Activated B cell treated with CpG ODN at 0.5 μM for 24 hours (primary cell): ENCODE measurements at regions of chr10 and their contacts with region 1.

Region 1: DNA sequence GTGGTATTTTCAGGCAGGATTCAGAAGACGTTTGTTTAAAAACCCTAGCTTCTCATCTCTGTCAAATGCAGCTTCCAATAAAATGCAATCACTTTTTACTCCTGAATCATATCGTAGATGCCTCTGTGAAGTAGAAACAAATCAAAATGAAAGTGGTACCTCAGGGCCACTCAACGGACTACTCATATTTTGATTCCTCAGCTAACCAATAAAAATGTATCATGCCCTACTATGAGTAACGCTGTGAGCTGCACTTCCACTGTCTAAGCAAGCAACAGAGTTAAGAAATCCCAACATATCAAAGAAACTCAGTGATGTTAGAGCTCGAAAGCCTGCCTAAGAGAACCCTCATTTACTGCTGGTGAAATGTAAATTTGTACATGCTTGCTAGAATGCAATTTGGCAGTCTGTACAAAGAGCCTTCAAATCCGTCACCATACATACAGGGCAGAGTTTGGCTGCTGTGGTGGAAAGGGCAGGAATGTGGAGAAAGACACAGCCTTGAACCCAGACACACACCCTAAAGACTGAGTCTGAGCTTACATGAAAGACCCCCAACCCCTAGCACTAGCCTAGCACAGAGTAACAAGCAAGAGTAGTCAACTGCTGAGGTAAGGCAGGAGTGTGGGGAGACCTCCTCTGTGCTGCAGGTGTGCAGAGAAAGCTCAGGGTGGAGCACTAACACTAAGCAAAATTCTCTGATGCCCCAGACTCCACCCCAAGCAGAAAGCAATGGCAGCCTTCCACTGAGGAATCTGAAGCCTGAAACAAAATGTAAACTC is 151.5 kb downstream of the ANK3 start:
- DNase-seq: peak; percentile 23
- ATAC-seq: peak; percentile 51
- H3K4me3 Mint-ChIP-seq: peak overlapping the region; percentile 67
- H3K27ac Mint-ChIP-seq: peak overlapping the region; percentile 93
- H3K4me1 Mint-ChIP-seq: peaks cover 61% of the 10 kb centered on the region
- H3K27me3 Mint-ChIP-seq: no peaks in the 10 kb centered on the region
- CTCF ChIP-seq: no peak

Region 2: GRCh38 chr10:59976909-59977308 is 261.3 kb before region 1 on chr10:
- CTCF ChIA-PET with region 1: no interaction called
- POLR2A ChIA-PET with region 1: no interaction called
- intact Hi-C with region 1: no loop called
- DNase-seq: no peak
- ATAC-seq: no peak
- H3K4me3 Mint-ChIP-seq: no peak overlapping the region
- H3K27ac Mint-ChIP-seq: no peak overlapping the region
- H3K4me1 Mint-ChIP-seq: no peaks in the 10 kb centered on the region
- H3K27me3 Mint-ChIP-seq: no peaks in the 10 kb centered on the region
- CTCF ChIP-seq: no peak

Region 3: GRCh38 chr10:60114765-60115586 is 123.2 kb before region 1 on chr10:
- CTCF ChIA-PET with region 1: interaction called, 15 read pairs
- POLR2A ChIA-PET with region 1: no interaction called
- intact Hi-C with region 1: no loop called
- DNase-seq: no peak
- ATAC-seq: peak; percentile 64
- H3K4me3 Mint-ChIP-seq: no peak overlapping the region
- H3K27ac Mint-ChIP-seq: no peak overlapping the region
- H3K4me1 Mint-ChIP-seq: no peaks in the 10 kb centered on the region
- H3K27me3 Mint-ChIP-seq: no peaks in the 10 kb centered on the region
- CTCF ChIP-seq: no peak

Region 4: DNA sequence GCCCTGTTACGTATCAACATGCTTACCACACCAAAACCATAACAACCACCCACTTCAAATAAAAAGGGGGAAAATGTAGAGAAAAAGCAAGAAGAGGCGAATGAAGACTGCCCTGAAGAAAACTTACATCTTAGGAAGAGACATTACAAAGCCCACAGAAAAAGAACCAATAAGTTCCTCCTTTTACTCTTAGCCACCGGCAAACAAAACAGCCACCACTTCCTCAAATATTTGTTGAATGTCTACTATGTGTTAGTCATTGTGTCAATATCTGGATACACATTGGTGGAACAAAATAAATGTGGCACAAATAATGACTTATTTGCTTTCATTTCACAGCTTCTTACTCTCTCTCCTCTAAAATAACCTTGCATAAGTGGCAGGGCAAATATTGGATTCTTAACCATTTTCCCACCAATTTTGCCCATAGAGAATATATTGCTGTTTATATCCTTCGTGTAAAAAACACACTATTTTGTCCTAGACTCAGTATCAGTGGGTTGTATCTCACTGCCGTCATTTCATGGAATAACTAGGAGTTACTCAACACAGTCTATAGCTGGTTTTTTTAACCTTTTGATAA is 44.7 kb after region 1 on chr10:
- CTCF ChIA-PET with region 1: interaction called, 3 read pairs
- POLR2A ChIA-PET with region 1: no interaction called
- intact Hi-C with region 1: loop called (anchors 2 kb)
- DNase-seq: no peak
- ATAC-seq: peak; percentile 88
- H3K4me3 Mint-ChIP-seq: peak overlapping the region; percentile 72
- H3K27ac Mint-ChIP-seq: peak overlapping the region; percentile 80
- H3K4me1 Mint-ChIP-seq: peaks cover 34% of the 10 kb centered on the region
- H3K27me3 Mint-ChIP-seq: no peaks in the 10 kb centered on the region
- CTCF ChIP-seq: no peak

Region 5: GRCh38 chr10:60323162-60323561 is 85.0 kb after region 1 on chr10:
- CTCF ChIA-PET with region 1: no interaction called
- POLR2A ChIA-PET with region 1: no interaction called
- intact Hi-C with region 1: no loop called
- DNase-seq: no peak
- ATAC-seq: no peak
- H3K4me3 Mint-ChIP-seq: no peak overlapping the region
- H3K27ac Mint-ChIP-seq: no peak overlapping the region
- H3K4me1 Mint-ChIP-seq: no peaks in the 10 kb centered on the region
- H3K27me3 Mint-ChIP-seq: no peaks in the 10 kb centered on the region
- CTCF ChIP-seq: no peak

Region 6: DNA sequence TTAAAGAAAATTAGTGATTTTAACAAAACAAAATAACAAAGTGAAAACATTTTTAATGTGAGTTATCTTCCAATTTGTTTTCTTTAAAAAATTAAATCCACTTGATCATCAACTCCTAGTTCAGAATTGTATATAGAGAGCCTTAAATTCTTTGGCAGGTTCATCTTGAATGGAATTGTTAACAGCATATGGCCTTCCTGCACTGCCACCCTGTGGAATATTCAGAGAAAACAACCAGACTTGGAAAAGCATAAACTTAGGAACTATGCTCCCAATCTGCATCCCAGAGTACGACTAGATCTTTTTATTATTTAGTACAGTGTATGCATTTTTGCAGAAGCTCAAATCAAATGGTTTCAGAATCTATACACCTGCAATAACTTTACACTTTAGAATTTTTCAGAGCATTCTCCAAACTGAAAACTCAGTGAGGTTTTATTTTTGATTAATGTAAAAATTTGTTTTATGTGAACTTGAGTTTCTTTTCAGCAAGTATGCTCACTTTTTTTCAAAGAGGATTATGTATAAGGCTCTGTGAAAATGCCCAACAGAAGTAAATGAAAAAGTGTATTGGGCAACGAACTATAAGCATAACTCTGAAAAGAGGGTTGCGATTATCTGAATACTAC is 196.4 kb after region 1 on chr10:
- CTCF ChIA-PET with region 1: interaction called, 68 read pairs
- POLR2A ChIA-PET with region 1: interaction called, 5 read pairs
- intact Hi-C with region 1: loop called (anchors 1 kb)
- DNase-seq: no peak
- ATAC-seq: no peak
- H3K4me3 Mint-ChIP-seq: no peak overlapping the region
- H3K27ac Mint-ChIP-seq: no peak overlapping the region
- H3K4me1 Mint-ChIP-seq: peaks cover 5% of the 10 kb centered on the region
- H3K27me3 Mint-ChIP-seq: no peaks in the 10 kb centered on the region
- CTCF ChIP-seq: peak; percentile 49

Region 7: GRCh38 chr10:60733189-60733822 is 495.1 kb after region 1 on chr10:
- CTCF ChIA-PET with region 1: no interaction called
- POLR2A ChIA-PET with region 1: no interaction called
- intact Hi-C with region 1: loop called (anchors 2 kb)
- DNase-seq: peak; percentile 45
- ATAC-seq: peak; percentile 83
- H3K4me3 Mint-ChIP-seq: peak overlapping the region; percentile 93
- H3K27ac Mint-ChIP-seq: no peak overlapping the region
- H3K4me1 Mint-ChIP-seq: peaks cover 36% of the 10 kb centered on the region
- H3K27me3 Mint-ChIP-seq: peaks cover 4% of the 10 kb centered on the region
- CTCF ChIP-seq: no peak

Region 8: GRCh38 chr10:61010863-61011262 is 772.7 kb after region 1 on chr10:
- CTCF ChIA-PET with region 1: no interaction called
- POLR2A ChIA-PET with region 1: no interaction called
- intact Hi-C with region 1: no loop called
- DNase-seq: no peak
- ATAC-seq: no peak
- H3K4me3 Mint-ChIP-seq: no peak overlapping the region
- H3K27ac Mint-ChIP-seq: no peak overlapping the region
- H3K4me1 Mint-ChIP-seq: no peaks in the 10 kb centered on the region
- H3K27me3 Mint-ChIP-seq: peaks cover 14% of the 10 kb centered on the region
- CTCF ChIP-seq: no peak

Region 9: GRCh38 chr10:61284222-61284890 is 1046.2 kb after region 1 on chr10:
- CTCF ChIA-PET with region 1: no interaction called
- POLR2A ChIA-PET with region 1: no interaction called
- intact Hi-C with region 1: loop called (anchors 2 kb)
- DNase-seq: no peak
- ATAC-seq: no peak
- H3K4me3 Mint-ChIP-seq: peak overlapping the region; percentile 41
- H3K27ac Mint-ChIP-seq: no peak overlapping the region
- H3K4me1 Mint-ChIP-seq: peaks cover 24% of the 10 kb centered on the region
- H3K27me3 Mint-ChIP-seq: peaks cover 7% of the 10 kb centered on the region
- CTCF ChIP-seq: peak; percentile 75